Naive thymus-derived CD4-positive, alpha-beta T cell (primary cell): ENCODE measurements at regions of chr13 and their contacts with region 1.

Region 1: GRCh38 chr13:45310341-45311125 is 30.4 kb downstream of the TPT1 start:
- DNase-seq: no peak
- ATAC-seq: no peak
- H3K4me3 ChIP-seq: peak overlapping the region; percentile 63
- H3K4me3 Mint-ChIP-seq: peak overlapping the region; percentile 82 to 93 (median 89)
- H3K27ac ChIP-seq: no peak overlapping the region
- H3K27ac Mint-ChIP-seq: peak overlapping the region in 6 of 9 donors; percentile 23 to 53 (median 46)
- H3K4me1 ChIP-seq: peaks cover 4 to 14% of the 10 kb centered on the region in 2 donors
- H3K4me1 Mint-ChIP-seq: peaks cover 11 to 23% (median 20%) of the 10 kb centered on the region in 7 donors
- H3K27me3 ChIP-seq: no peaks in the 10 kb centered on the region
- H3K27me3 Mint-ChIP-seq: peaks cover 0 to 16% (median 4%) of the 10 kb centered on the region in 5 donors

Region 2: DNA sequence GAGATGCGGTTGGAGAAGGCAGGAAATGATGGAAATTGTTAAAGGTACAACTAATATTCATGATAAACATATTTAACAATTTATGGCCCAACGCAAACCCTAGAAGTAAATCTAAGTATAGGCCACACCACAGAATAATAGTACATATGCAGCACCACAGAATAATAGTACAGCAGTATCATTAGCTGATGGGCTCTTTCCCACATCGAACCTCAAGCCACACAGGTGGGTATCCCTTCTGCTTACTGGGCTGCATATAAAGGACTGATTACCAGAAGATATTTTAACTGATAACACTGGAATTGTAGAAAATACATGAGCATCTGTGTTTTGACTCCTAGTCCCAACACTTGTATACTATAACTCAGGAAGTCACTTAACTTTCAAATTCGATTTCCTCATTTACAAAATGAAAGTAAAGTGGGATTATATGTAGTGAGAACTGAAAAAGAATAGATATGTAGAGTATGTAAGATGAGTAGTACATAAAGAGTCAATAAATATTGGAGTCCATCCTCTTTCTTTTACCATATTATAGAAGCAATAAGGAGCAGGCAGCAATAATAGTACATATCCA is 825.9 kb before region 1 on chr13:
- CTCF ChIA-PET with region 1: no interaction called
- POLR2A ChIA-PET with region 1: no interaction called
- intact Hi-C with region 1: loop called (anchors 1 to 5 kb)
- DNase-seq: no peak
- ATAC-seq: no peak
- H3K4me3 ChIP-seq: peak overlapping the region; percentile 38
- H3K4me3 Mint-ChIP-seq: peak overlapping the region; percentile 13 to 77 (median 72)
- H3K27ac ChIP-seq: peak overlapping the region; percentile 22
- H3K27ac Mint-ChIP-seq: peak overlapping the region in 8 of 9 donors; percentile 1 to 73 (median 52)
- H3K4me1 ChIP-seq: peaks cover 7 to 16% of the 10 kb centered on the region in 2 donors
- H3K4me1 Mint-ChIP-seq: peaks cover 6 to 25% (median 14%) of the 10 kb centered on the region in 7 donors
- H3K27me3 ChIP-seq: no peaks in the 10 kb centered on the region
- H3K27me3 Mint-ChIP-seq: no peaks in the 10 kb centered on the region

Region 3: GRCh38 chr13:44988973-44989817 is 321.3 kb before region 1 on chr13 and contains the starts of genes GPALPP1 and NUFIP1:
- CTCF ChIA-PET with region 1: no interaction called
- POLR2A ChIA-PET with region 1: no interaction called
- intact Hi-C with region 1: loop called in 1 of 2 experiments (anchors 1 kb)
- DNase-seq: peak; percentile 79 to 94 (median 90)
- ATAC-seq: peak; percentile 98
- H3K4me3 ChIP-seq: peak within 1 kb of the TSS; percentile 94
- H3K4me3 Mint-ChIP-seq: peak within 1 kb of the TSS; percentile 96 to 100 (median 98)
- H3K27ac ChIP-seq: peak within 1 kb of the TSS; percentile 95
- H3K27ac Mint-ChIP-seq: peak within 1 kb of the TSS; percentile 91 to 99 (median 98)
- H3K4me1 ChIP-seq: peaks cover 18 to 27% of the 10 kb centered on the region in 2 donors
- H3K4me1 Mint-ChIP-seq: peaks cover 42 to 81% (median 68%) of the 10 kb centered on the region in 7 donors
- H3K27me3 ChIP-seq: no peaks in the 10 kb centered on the region
- H3K27me3 Mint-ChIP-seq: no peaks in the 10 kb centered on the region
- total RNA-seq, gene GPALPP1: 29.7 to 43.1 (median 33.0) TPM
- total RNA-seq, gene NUFIP1: 3.7 to 6.6 (median 5.4) TPM

Region 4: GRCh38 chr13:45119991-45120864 is 190.3 kb before region 1 on chr13 and contains the start of gene GTF2F2:
- CTCF ChIA-PET with region 1: no interaction called
- POLR2A ChIA-PET with region 1: no interaction called
- intact Hi-C with region 1: loop called (anchors 2 kb)
- DNase-seq: peak; percentile 81 to 89 (median 86)
- ATAC-seq: peak; percentile 80
- H3K4me3 ChIP-seq: peak within 1 kb of the TSS; percentile 80
- H3K4me3 Mint-ChIP-seq: no peak within 1 kb of the TSS
- H3K27ac ChIP-seq: peak within 1 kb of the TSS; percentile 91
- H3K27ac Mint-ChIP-seq: no peak within 1 kb of the TSS
- H3K4me1 ChIP-seq: peaks cover 16 to 21% of the 10 kb centered on the region in 2 donors
- H3K4me1 Mint-ChIP-seq: peaks cover 6 to 17% (median 13%) of the 10 kb centered on the region in 7 donors
- H3K27me3 ChIP-seq: no peaks in the 10 kb centered on the region
- H3K27me3 Mint-ChIP-seq: no peaks in the 10 kb centered on the region
- total RNA-seq, gene GTF2F2: 13.7 to 20.4 (median 15.2) TPM

Region 5: DNA sequence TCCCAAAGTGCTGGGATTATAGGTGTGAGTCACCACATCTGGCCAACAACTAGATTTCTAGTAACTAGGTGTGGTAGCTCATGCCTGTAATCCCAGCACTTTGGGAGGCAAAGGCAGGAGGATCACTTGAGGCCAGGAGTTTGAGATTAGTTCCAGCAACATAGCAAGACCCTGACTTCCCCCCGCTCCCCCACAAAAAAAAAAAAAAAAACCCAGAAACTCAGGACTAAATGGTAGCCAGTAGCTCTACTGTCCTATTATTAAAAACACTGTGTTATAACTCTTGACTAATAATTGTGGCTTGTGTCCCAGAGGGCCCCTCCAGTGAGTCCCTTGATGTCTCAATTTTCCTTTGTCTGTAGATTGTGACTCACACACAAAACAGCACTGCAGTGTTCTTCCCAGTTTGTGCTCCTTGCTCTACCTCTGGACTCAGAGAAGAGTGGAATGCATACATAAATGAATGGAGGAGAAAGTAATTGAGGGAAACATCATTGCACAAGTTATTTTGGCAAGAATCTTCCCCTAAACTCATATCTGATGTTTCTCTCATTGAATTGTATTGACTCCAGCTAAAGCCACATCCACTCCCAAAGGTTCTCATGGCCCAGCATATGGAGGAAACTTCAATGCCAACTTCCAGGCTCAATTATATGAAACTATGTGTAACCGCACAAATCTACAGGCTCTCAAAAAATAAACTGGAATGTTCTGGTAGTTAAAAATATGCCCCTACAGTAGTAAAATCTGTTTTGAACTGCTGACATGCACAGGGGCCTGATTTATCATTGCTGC is 21.7 kb after region 1 on chr13:
- CTCF ChIA-PET with region 1: interaction called, 3 read pairs
- POLR2A ChIA-PET with region 1: interaction called, 3 read pairs
- intact Hi-C with region 1: loop called (anchors 1 kb)
- DNase-seq: no peak
- ATAC-seq: no peak
- H3K4me3 ChIP-seq: no peak overlapping the region
- H3K4me3 Mint-ChIP-seq: peak overlapping the region in 3 of 10 donors; percentile 7 to 33 (median 20)
- H3K27ac ChIP-seq: peak overlapping the region; percentile 32
- H3K27ac Mint-ChIP-seq: peak overlapping the region in 8 of 9 donors; percentile 53 to 92 (median 84)
- H3K4me1 ChIP-seq: peaks cover 49 to 63% of the 10 kb centered on the region in 2 donors
- H3K4me1 Mint-ChIP-seq: peaks cover 66 to 99% (median 89%) of the 10 kb centered on the region in 7 donors
- H3K27me3 ChIP-seq: no peaks in the 10 kb centered on the region
- H3K27me3 Mint-ChIP-seq: no peaks in the 10 kb centered on the region

Region 6: GRCh38 chr13:45367358-45367757 is 56.8 kb after region 1 on chr13:
- CTCF ChIA-PET with region 1: no interaction called
- POLR2A ChIA-PET with region 1: interaction called, 4 read pairs
- intact Hi-C with region 1: loop called in 1 of 2 experiments (anchors 1 kb)
- DNase-seq: peak; percentile 38 to 93 (median 82)
- ATAC-seq: peak; percentile 99
- H3K4me3 ChIP-seq: no peak overlapping the region
- H3K4me3 Mint-ChIP-seq: peak overlapping the region; percentile 48 to 80 (median 67)
- H3K27ac ChIP-seq: peak overlapping the region; percentile 31
- H3K27ac Mint-ChIP-seq: peak overlapping the region; percentile 81 to 96 (median 90)
- H3K4me1 ChIP-seq: peaks cover 25 to 27% of the 10 kb centered on the region in 2 donors
- H3K4me1 Mint-ChIP-seq: peaks cover 48 to 62% (median 60%) of the 10 kb centered on the region in 7 donors
- H3K27me3 ChIP-seq: no peaks in the 10 kb centered on the region
- H3K27me3 Mint-ChIP-seq: no peaks in the 10 kb centered on the region